ENCODE measurements at regions of chr6 and their contacts with region 1.

Region 1: GRCh38 chr6:11366183-11366933 is 133.9 kb upstream of the NEDD9 start:
- DNase-seq: peak; percentile 75
- H3K4me3 Mint-ChIP-seq: peak overlapping the region; percentile 29
- H3K27ac Mint-ChIP-seq: peak overlapping the region; percentile 67
- H3K4me1 Mint-ChIP-seq: peaks cover 96% of the 10 kb centered on the region
- H3K27me3 Mint-ChIP-seq: no peaks in the 10 kb centered on the region

Region 2: GRCh38 chr6:11172501-11173332 is 193.6 kb before region 1 on chr6:
- CTCF ChIA-PET with region 1: interaction called, 6 read pairs
- intact Hi-C with region 1: loop called (anchors 2 kb)
- DNase-seq: peak; percentile 84
- H3K4me3 Mint-ChIP-seq: no peak overlapping the region
- H3K27ac Mint-ChIP-seq: no peak overlapping the region
- H3K4me1 Mint-ChIP-seq: peaks cover 11% of the 10 kb centered on the region
- H3K27me3 Mint-ChIP-seq: no peaks in the 10 kb centered on the region

Region 3: GRCh38 chr6:11317885-11318771 is 48.2 kb before region 1 on chr6:
- CTCF ChIA-PET with region 1: no interaction called
- intact Hi-C with region 1: loop called (anchors 1 kb)
- DNase-seq: peak; percentile 91
- H3K4me3 Mint-ChIP-seq: no peak overlapping the region
- H3K27ac Mint-ChIP-seq: peak overlapping the region; percentile 90
- H3K4me1 Mint-ChIP-seq: peaks cover 43% of the 10 kb centered on the region
- H3K27me3 Mint-ChIP-seq: no peaks in the 10 kb centered on the region

Region 4: DNA sequence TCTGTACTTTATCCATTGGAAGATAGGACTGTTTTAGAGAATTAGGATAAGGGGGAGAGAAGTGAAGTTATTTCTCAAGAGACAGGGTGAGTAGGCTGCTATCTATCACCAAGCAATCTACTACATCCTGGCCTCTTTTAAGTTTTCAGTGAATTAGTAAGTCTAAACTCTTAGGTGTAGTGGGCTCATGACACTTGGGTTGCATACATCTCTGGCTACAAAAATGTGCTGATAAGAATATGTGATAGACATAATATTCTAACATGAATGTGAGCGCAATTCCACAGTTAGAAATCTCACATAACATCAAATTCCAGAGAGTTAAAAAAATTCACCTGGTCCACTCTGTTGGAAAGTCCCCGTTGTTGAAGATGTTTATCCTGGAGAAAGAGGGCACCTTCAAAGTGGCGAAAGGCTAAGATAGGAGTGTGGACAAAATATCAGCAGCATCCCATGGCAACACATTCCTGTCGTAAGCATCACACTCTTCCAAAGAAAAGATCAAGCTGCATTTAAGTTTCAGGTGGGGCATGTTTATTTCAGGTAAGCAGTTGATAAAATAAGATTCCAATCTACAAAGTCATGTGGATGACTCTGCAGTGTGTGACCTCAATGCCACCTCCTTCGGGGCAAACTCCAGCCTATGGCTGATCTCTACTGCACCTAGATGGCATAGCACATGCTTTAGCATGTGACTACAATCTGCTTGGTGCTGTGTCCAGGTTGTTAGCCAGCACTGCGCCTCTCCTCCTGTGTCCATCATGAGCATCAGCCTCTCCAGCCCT is 22.2 kb before region 1 on chr6:
- CTCF ChIA-PET with region 1: interaction called, 3 read pairs
- intact Hi-C with region 1: loop called (anchors 1 kb)
- DNase-seq: no peak
- H3K4me3 Mint-ChIP-seq: no peak overlapping the region
- H3K27ac Mint-ChIP-seq: peak overlapping the region; percentile 81
- H3K4me1 Mint-ChIP-seq: peaks cover 86% of the 10 kb centered on the region
- H3K27me3 Mint-ChIP-seq: no peaks in the 10 kb centered on the region

Region 5: DNA sequence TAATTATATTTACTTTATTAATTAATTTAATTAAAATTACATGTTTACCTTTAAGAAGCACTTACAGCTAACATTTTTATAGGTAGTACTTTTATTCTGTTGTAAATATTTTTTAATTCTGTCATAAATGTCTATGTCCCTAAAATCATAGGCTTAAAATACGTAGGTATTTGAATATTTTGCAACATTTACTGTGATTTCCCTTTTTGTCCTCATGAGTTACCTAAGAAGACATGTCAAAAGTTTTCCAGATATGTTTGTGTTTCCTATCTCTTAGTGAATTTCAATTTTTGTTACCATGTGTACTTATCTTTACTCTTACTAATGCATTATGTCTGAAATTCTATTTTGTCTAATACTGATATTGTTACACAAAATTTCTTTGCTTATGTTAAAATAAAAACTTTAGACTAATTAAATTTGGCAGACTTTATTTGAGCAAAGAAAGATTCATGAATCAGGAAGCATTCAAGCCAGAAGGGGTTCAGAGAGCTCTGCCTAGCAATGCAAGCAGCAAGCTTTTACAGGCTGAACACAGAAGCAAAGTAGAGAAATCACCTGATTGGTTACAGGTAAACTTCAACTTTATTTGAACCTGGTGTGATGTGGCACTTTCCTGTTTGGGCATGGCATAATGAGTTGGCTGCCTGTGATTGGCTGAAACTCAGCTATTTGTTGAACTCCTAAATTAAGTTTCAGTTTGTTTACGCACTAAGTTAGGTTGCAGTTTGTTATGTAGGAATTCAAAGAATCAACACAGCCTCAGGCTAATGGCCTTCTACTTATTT is 48.0 kb after region 1 on chr6:
- CTCF ChIA-PET with region 1: no interaction called
- intact Hi-C with region 1: loop called (anchors 1 kb)
- DNase-seq: peak; percentile 60
- H3K4me3 Mint-ChIP-seq: no peak overlapping the region
- H3K27ac Mint-ChIP-seq: no peak overlapping the region
- H3K4me1 Mint-ChIP-seq: peaks cover 33% of the 10 kb centered on the region
- H3K27me3 Mint-ChIP-seq: no peaks in the 10 kb centered on the region

Region 6: GRCh38 chr6:11732036-11732631 is 365.8 kb after region 1 on chr6:
- CTCF ChIA-PET with region 1: no interaction called
- intact Hi-C with region 1: loop called (anchors 5 kb)
- DNase-seq: peak; percentile 87
- H3K4me3 Mint-ChIP-seq: peak overlapping the region; percentile 3
- H3K27ac Mint-ChIP-seq: peak overlapping the region; percentile 92
- H3K4me1 Mint-ChIP-seq: peaks cover 63% of the 10 kb centered on the region
- H3K27me3 Mint-ChIP-seq: no peaks in the 10 kb centered on the region